Aorta (tissue), 5 donors: ENCODE measurements at regions of chr13 and their contacts with region 1.

Region 1: GRCh38 chr13:110301606-110302553 is 5.1 kb downstream of the COL4A1 start:
- DNase-seq: peak in 1 of 2 donors; percentile 53
- ATAC-seq: no peak
- H3K4me3 ChIP-seq: no peak overlapping the region
- H3K27ac ChIP-seq: peak overlapping the region; percentile 46 to 73
- H3K4me1 ChIP-seq: peaks cover 7 to 13% of the 10 kb centered on the region in 2 donors
- H3K27me3 ChIP-seq: no peaks in the 10 kb centered on the region

Region 2: DNA sequence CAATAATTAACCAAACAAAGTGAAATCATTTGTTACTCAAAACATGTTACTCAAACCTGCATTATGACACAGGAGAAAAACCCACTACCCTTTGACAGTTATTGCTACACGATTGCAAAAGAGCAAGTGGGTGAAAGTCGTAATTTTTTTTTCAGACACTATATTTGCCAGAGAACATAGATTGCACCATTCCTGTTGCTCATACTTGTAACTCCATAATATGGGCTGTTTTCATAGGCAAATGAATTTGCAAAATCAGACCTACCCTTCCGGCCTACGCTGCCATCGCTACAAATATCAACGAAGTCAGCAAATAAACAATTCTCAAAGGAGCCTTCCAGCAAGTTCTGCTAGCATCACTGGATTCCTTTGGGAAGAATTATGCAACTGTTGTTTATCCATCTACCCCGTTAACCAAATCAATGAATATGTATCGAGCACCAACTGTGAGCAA is 912.0 kb before region 1 on chr13:
- intact Hi-C with region 1: no loop called
- DNase-seq: no peak
- ATAC-seq: no peak
- H3K4me3 ChIP-seq: no peak overlapping the region
- H3K27ac ChIP-seq: no peak overlapping the region
- H3K4me1 ChIP-seq: peaks cover 0 to 2% of the 10 kb centered on the region in 2 donors
- H3K27me3 ChIP-seq: no peaks in the 10 kb centered on the region

Region 3: DNA sequence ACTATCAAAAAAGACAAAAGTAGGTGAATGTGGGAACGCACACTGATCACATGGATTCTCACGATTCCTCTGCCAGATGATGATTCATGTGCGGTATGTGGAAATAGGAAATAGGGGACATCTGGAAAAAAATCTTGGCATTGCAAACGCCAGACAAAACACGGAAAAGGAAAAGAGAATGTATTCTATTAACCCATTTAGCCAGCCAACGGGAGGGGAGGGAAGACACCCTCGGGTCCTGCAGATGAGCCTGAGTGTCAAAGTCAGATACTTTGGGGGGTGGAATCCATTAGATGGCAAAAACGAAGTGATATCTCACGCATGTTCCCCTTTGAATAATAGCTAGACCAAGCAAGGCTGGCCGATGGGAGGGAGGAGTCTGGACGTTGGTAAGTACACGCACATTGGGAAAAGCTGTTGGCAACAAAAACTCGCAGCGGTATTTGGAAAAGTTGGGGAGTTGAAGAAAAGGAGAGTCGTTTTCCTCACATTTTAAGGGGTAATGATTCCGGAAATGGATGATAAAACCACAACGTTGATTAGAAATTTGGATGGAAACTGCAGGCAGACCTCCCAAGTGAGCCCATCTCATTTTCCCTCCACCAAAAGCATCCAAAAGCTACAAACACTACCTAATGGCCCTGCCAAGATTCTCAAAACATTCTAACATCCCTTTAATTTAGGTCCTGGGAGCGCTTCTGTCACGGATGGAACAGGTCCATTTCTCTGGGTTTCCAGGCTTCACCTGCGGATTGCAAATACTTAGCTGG is 68.5 kb before region 1 on chr13:
- intact Hi-C with region 1: loop called (anchors 5 kb)
- DNase-seq: peak; percentile 74 to 75
- ATAC-seq: peak; percentile 72
- H3K4me3 ChIP-seq: no peak overlapping the region
- H3K27ac ChIP-seq: peak overlapping the region in 1 of 2 donors; percentile 61
- H3K4me1 ChIP-seq: peaks cover 4 to 5% of the 10 kb centered on the region in 2 donors
- H3K27me3 ChIP-seq: no peaks in the 10 kb centered on the region

Region 4: DNA sequence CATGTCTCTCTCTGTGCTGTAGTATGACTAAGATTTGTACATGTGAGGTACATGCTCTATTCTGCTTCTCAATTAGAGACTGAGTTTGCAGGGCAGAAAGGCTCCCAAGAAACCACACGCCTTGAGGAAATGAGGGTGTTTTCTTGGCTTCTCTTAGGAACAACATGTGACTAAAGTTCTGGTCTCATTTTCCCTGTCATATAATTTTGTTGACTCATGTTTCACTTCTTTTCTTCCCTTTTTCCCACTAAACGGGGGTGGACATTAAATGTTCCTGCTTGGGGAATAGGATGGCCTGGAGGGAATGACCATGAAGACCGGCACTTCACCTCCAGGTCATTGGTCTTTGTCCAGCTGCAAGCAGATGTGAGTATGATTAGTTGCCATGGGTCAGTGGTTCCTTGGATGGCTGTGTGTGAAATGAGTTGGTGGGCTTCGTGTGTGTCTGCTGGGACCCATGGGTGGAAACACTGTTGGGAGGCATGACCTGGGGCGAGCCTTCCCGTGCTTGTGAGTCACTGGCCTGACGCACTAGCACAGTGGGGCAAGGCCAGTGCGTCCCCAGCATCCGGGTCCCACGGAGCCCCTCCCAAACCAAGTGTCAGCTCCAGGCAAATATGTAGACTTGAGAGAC is 51.5 kb before region 1 on chr13:
- intact Hi-C with region 1: no loop called
- DNase-seq: peak in 1 of 2 donors; percentile 84
- ATAC-seq: peak; percentile 67
- H3K4me3 ChIP-seq: no peak overlapping the region
- H3K27ac ChIP-seq: peak overlapping the region; percentile 96 to 99
- H3K4me1 ChIP-seq: peaks cover 3 to 4% of the 10 kb centered on the region in 2 donors
- H3K27me3 ChIP-seq: no peaks in the 10 kb centered on the region